ENCODE measurements at regions of chr15 and their contacts with region 1.

Region 1: DNA sequence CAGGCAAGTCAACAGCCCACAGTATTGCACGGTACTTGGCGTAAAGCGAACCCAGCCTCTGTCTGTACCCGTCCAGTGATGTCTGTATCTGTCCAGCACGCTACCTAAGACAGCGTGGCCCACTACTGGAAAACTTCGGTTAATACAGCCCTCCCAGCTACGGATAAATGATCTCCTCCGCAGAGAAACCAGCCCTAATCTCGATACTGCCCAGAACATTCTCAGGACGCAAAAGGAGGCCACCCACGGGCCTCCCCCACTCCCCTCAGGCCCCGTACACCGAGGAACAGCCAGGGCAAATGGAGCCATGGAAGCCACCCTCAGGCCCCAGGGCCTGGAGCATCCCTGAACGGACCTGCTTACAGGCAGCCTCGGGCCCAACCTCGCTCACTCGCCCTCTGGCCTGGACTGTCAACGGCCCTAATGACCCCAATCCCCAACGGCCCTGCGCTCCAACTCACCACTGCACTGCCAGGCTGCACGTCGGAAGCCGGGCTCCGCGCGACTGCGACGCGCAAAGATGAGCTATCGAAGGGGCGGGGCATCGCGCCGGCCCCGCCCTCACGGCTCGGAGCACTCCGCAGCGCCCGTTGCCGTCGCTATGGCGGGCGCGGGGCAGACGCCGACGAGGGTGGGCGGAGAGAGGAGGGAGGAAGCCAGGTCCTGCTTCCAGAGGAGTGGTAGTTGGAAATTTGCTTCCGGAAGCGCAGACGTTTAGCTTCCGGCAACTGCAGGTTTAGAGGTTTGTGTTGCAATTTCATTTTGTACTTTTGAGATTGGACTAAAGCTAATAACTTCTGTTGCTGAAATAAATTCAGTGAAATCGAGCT is at the start of gene SKIC8:
- DNase-seq: no peak
- H3K4me3 ChIP-seq: peak within 1 kb of the TSS; percentile 100
- CTCF ChIP-seq: no peak

Region 2: GRCh38 chr15:77784395-77785292 is 514.7 kb before region 1 on chr15:
- CTCF ChIA-PET with region 1: no interaction called
- POLR2A ChIA-PET with region 1: no interaction called
- DNase-seq: no peak
- H3K4me3 ChIP-seq: no peak overlapping the region
- CTCF ChIP-seq: peak; percentile 28

Region 3: DNA sequence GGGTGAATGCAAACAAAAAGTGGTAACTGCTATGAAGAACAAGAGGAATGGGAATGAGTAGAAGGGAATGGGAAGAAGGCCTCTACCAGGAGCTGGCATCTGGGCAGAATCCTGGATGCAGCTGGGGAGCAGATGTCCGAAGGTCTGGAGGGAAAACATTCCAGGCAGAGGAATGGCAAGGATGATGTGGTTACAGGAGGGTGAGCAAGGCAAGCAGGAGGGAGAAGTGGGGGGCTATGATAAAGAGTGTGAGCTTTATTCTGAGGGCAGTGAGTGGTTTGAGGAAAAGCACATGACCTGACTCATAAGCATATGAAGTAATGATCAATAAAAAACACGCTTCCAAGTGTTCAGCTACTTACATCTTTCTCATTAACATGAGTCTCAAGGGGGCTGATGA is 17.0 kb before region 1 on chr15:
- CTCF ChIA-PET with region 1: interaction called, 9 read pairs
- POLR2A ChIA-PET with region 1: interaction called, 12 read pairs
- DNase-seq: no peak
- H3K4me3 ChIP-seq: no peak overlapping the region
- CTCF ChIP-seq: no peak

Measured in AG04449 (cell line).